Right ventricle myocardium inferior (tissue), 1 donor: ENCODE measurements at regions of chrX and their contacts with region 1.

Region 1: GRCh38 chrX:54529552-54530357 is at the start of gene GNL3L:
- DNase-seq: peak; percentile 94
- ATAC-seq: peak; percentile 96
- total RNA-seq, gene GNL3L: 25.6 TPM

Region 2: GRCh38 chrX:54248309-54248708 is 281.4 kb before region 1 on chrX:
- intact Hi-C with region 1: loop called (anchors 10 kb)
- DNase-seq: no peak
- ATAC-seq: no peak

Region 3: GRCh38 chrX:54439967-54440871 is 89.5 kb before region 1 on chrX and contains the start of gene TSR2:
- intact Hi-C with region 1: loop called (anchors 5 kb)
- DNase-seq: peak; percentile 90
- ATAC-seq: peak; percentile 98
- total RNA-seq, gene TSR2: 37.7 TPM

Region 4: DNA sequence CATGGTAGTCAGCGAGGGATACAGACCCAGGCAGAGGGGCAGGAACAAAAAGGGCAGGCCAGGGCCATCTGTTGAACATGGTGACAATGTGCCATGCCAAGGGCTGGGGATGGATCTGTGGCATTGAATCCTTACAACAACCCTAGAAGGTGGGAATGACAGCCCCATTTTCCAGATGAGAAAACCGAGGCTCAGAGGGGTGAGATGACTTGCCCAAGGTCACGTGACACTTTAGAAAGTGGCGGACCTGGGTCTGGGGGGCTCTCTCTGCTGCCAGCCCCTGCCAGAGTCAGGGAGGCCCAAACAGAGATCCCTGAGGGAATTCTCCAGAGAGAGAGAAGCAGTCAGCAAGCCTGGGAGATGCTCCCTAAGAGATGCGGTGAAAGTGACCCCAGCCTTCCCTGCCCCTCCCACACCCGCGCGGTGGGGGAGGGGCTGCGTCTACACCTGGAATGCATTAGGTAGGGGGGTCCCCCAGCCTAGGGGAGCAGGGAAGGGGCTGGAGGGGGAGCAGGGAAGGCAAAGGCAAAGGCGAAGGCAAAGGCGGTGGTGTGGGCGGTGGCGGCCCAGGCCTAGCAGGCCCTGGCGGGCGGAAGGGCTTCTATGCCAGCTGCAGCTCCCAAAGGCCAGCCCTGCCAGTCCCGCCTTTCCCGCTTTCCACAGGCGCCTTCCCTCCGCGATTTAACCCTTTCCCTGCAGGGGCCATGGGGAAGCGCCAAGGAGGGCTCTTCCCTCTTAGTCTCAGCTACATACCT is 46.7 kb before region 1 on chrX:
- intact Hi-C with region 1: loop called (anchors 5 kb)
- DNase-seq: no peak
- ATAC-seq: peak; percentile 38